Caco-2 (cell line): ENCODE measurements at regions of chr3 and their contacts with region 1.

Region 1: DNA sequence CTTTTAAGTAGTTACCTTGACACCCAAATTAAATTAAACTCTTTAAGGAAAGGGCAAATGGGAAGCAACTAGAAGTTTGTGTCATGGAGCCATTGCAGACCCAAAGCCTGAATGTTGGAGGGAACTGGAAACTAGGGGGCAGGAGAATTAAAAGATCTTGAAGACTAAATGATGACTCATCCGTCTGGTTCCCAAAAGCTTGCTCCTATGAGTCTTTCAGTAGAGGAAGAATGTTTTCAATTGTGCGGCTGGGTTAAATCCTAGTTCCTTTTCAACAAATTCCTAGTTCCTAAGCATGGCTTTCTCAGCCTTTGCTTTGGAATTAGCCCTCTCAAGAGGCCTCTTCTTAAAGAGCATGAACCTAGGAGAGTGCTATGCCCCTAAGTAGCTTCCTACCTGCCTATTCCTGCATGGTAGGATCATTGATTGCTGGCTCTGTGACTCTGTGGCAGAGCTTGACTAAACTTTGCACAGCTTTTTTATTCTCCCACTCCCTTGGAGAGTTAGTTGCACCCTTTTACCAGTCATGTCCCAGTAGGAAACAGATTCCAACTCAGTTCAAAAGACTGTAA is 17.7 kb downstream of the CLEC3B start:
- DNase-seq: no peak
- H3K4me3 ChIP-seq: no peak overlapping the region
- H3K4me3 Mint-ChIP-seq: no peak overlapping the region
- H3K27ac Mint-ChIP-seq: no peak overlapping the region
- H3K4me1 ChIP-seq: no peaks in the 10 kb centered on the region
- H3K4me1 Mint-ChIP-seq: peaks cover 6% of the 10 kb centered on the region
- H3K27me3 ChIP-seq: no peaks in the 10 kb centered on the region
- H3K27me3 Mint-ChIP-seq: peaks cover 4% of the 10 kb centered on the region
- CTCF ChIP-seq: no peak

Region 2: GRCh38 chr3:44870381-44871078 is 173.3 kb before region 1 on chr3:
- CTCF ChIA-PET with region 1: no interaction called
- POLR2A ChIA-PET with region 1: no interaction called
- intact Hi-C with region 1: no loop called
- DNase-seq: no peak
- H3K4me3 ChIP-seq: no peak overlapping the region
- H3K4me3 Mint-ChIP-seq: no peak overlapping the region
- H3K27ac Mint-ChIP-seq: no peak overlapping the region
- H3K4me1 ChIP-seq: no peaks in the 10 kb centered on the region
- H3K4me1 Mint-ChIP-seq: no peaks in the 10 kb centered on the region
- H3K27me3 ChIP-seq: no peaks in the 10 kb centered on the region
- H3K27me3 Mint-ChIP-seq: no peaks in the 10 kb centered on the region
- CTCF ChIP-seq: no peak

Region 3: DNA sequence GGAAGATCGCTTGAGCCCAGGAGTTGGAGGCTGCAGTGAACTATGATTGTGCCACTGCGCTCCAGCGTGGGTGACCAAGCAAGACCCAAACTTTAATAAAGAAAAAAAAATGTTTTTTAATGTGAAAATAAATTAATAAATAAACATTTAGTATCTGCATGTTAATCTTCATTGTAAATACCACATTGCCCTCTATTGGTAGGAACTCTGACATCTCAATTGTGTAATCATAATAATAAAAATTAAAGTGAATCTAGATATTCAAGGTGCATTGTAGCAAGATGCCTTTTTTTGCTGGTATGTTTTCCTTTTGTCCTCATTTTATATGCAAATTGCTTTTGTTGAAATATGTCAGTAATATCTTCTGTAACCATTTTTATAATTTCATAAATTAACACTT is 455.7 kb after region 1 on chr3:
- CTCF ChIA-PET with region 1: no interaction called
- POLR2A ChIA-PET with region 1: no interaction called
- intact Hi-C with region 1: loop called (anchors 2 kb)
- DNase-seq: no peak
- H3K4me3 ChIP-seq: no peak overlapping the region
- H3K4me3 Mint-ChIP-seq: no peak overlapping the region
- H3K27ac Mint-ChIP-seq: no peak overlapping the region
- H3K4me1 ChIP-seq: no peaks in the 10 kb centered on the region
- H3K4me1 Mint-ChIP-seq: no peaks in the 10 kb centered on the region
- H3K27me3 ChIP-seq: no peaks in the 10 kb centered on the region
- H3K27me3 Mint-ChIP-seq: no peaks in the 10 kb centered on the region
- CTCF ChIP-seq: peak; percentile 13 to 25